Psoas muscle (tissue), 8 donors: ENCODE measurements at regions of chr16 and their contacts with region 1.

Region 1: GRCh38 chr16:7278636-7279265 is 53.9 kb upstream of the RBFOX1 start:
- DNase-seq: no peak
- ATAC-seq: no peak
- H3K4me3 ChIP-seq: no peak overlapping the region
- H3K27ac ChIP-seq: no peak overlapping the region
- H3K4me1 ChIP-seq: peaks cover 14% of the 10 kb centered on the region
- H3K27me3 ChIP-seq: no peaks in the 10 kb centered on the region
- CTCF ChIP-seq: no peak

Region 2: GRCh38 chr16:7148606-7149005 is 130.1 kb before region 1 on chr16:
- intact Hi-C with region 1: no loop called
- DNase-seq: no peak
- ATAC-seq: no peak
- H3K4me3 ChIP-seq: no peak overlapping the region
- H3K27ac ChIP-seq: no peak overlapping the region
- H3K4me1 ChIP-seq: no peaks in the 10 kb centered on the region
- H3K27me3 ChIP-seq: no peaks in the 10 kb centered on the region
- CTCF ChIP-seq: no peak

Region 3: DNA sequence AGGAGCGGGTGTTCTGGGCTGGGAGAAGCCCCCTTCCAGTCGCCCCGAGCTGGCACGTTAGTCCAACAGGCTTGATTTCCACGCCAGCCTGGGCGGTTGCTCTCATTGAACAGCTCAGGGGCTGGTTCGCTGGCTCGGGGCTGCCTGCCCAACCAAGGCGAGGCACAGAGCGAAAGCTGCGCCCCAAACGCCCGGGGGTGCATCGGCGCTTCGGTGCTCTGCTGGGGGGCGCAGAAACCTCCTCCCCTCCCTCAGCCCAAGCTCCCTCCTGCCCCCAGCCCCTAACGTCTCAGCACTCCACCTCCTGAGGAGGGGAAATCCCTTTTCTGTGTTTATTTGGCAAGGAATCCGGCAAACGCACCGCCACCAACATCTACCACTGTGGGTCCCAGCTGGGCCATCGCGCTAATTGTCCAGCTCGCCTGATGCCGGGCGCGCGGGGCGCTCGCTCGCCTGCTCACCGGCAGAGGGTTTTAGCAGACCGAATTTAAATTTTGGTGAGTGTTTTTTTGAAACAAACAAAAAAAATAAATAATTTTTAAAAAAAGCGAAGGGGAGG is 24.4 kb after region 1 on chr16:
- intact Hi-C with region 1: loop called in 1 of 2 experiments (anchors 1 kb)
- DNase-seq: peak in 1 of 2 donors; percentile 55
- ATAC-seq: peak; percentile 59 to 89 (median 69)
- H3K4me3 ChIP-seq: peak overlapping the region; percentile 65
- H3K27ac ChIP-seq: no peak overlapping the region
- H3K4me1 ChIP-seq: no peaks in the 10 kb centered on the region
- H3K27me3 ChIP-seq: peaks cover 0 to 10% (median 0%) of the 10 kb centered on the region in 3 donors
- CTCF ChIP-seq: peak; percentile 15

Region 4: DNA sequence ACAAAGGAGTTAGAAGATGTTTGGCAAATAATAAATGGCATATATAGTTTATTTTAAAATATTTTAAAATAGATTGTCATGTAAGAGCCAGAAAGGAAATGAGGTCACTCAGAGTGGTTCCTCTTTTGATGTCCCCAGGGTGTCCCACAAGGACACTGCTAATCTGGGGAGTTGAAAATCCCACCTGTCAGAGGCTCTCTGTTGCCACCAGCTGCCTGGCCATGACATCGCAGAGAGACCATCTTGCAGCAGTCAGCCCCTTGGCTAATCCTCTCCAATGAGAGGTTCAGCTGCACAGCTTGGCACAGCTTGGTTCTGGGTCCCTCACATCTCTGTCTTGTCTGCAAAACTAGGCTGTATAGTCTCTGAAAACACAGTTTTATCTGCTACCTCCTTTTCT is 42.9 kb after region 1 on chr16:
- intact Hi-C with region 1: loop called in 1 of 2 experiments (anchors 5 kb)
- DNase-seq: no peak
- ATAC-seq: peak; percentile 35 to 65 (median 45)
- H3K4me3 ChIP-seq: no peak overlapping the region
- H3K27ac ChIP-seq: peak overlapping the region; percentile 58
- H3K4me1 ChIP-seq: peaks cover 37% of the 10 kb centered on the region
- H3K27me3 ChIP-seq: no peaks in the 10 kb centered on the region
- CTCF ChIP-seq: no peak